ENCODE measurements at regions of chr3 and their contacts with region 1.

Region 1: GRCh38 chr3:36457667-36458066 is 77.4 kb downstream of the STAC start:
- DNase-seq: no peak

Region 2: GRCh38 chr3:34947834-34948233 is 1509.8 kb before region 1 on chr3:
- intact Hi-C with region 1: loop called in 1 of 2 experiments (anchors 5 kb)
- DNase-seq: no peak

Region 3: GRCh38 chr3:36295296-36295695 is 162.4 kb before region 1 on chr3:
- intact Hi-C with region 1: no loop called
- DNase-seq: no peak

Region 4: DNA sequence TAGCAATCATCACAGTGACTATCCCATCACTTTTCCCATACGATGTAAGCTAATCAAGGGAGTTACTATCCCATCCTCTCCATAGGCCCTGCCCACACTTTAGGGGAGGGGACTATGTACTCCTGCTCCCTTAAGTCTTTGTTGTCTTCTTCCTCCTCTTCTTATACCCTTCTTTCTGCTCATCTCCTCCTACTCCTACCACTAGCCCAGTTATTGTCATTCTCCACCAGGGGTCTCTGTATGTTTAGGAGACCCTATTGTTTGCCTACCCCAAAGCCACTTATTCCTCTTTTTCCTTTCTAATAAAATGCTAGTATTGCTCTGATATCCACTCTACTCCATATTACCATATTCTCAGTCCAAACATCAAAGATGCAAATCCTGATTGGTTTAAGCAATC is 49.5 kb before region 1 on chr3:
- intact Hi-C with region 1: no loop called
- DNase-seq: no peak

Measured in posterior vena cava (tissue), 2 donors.